MCF 10A (cell line): ENCODE measurements at regions of chrX and their contacts with region 1.

Region 1: DNA sequence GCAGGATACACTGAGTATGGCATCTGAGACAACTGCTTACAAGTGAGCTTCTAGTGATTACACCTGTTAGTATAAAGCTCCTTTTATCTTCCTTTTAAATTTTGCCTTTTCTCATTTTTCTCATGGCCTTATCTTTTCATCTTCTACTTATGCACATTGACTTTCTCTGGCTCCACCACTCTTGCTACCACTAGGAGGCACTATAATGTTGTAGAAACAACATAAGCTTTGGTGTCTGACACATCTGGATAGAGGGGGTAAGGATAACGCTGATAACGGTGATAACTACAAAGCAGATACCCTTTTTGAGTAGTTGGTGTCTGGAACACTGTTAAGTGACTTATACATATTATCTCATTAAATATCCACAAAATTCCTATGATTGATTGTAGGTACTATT is 187.4 kb upstream of the TEX13C start:
- DNase-seq: peak; percentile 28
- H3K4me3 Mint-ChIP-seq: no peak overlapping the region
- H3K27ac Mint-ChIP-seq: no peak overlapping the region
- H3K4me1 Mint-ChIP-seq: no peaks in the 10 kb centered on the region
- H3K27me3 Mint-ChIP-seq: no peaks in the 10 kb centered on the region
- CTCF ChIP-seq: peak; percentile 53

Region 2: GRCh38 chrX:124211312-124211942 is 920.9 kb before region 1 on chrX:
- CTCF ChIA-PET with region 1: interaction called, 3 read pairs
- POLR2A ChIA-PET with region 1: no interaction called
- intact Hi-C with region 1: loop called (anchors 2 kb)
- DNase-seq: peak; percentile 51
- H3K4me3 Mint-ChIP-seq: no peak overlapping the region
- H3K27ac Mint-ChIP-seq: no peak overlapping the region
- H3K4me1 Mint-ChIP-seq: no peaks in the 10 kb centered on the region
- H3K27me3 Mint-ChIP-seq: no peaks in the 10 kb centered on the region
- CTCF ChIP-seq: peak; percentile 45

Region 3: GRCh38 chrX:124395145-124395880 is 737.0 kb before region 1 on chrX:
- CTCF ChIA-PET with region 1: interaction called, 16 read pairs
- POLR2A ChIA-PET with region 1: no interaction called
- intact Hi-C with region 1: no loop called
- DNase-seq: no peak
- H3K4me3 Mint-ChIP-seq: no peak overlapping the region
- H3K27ac Mint-ChIP-seq: no peak overlapping the region
- H3K4me1 Mint-ChIP-seq: no peaks in the 10 kb centered on the region
- H3K27me3 Mint-ChIP-seq: no peaks in the 10 kb centered on the region
- CTCF ChIP-seq: no peak

Region 4: GRCh38 chrX:124413244-124413643 is 719.0 kb before region 1 on chrX:
- CTCF ChIA-PET with region 1: interaction called, 79 read pairs
- POLR2A ChIA-PET with region 1: interaction called, 3 read pairs
- intact Hi-C with region 1: no loop called
- DNase-seq: no peak
- H3K4me3 Mint-ChIP-seq: no peak overlapping the region
- H3K27ac Mint-ChIP-seq: no peak overlapping the region
- H3K4me1 Mint-ChIP-seq: no peaks in the 10 kb centered on the region
- H3K27me3 Mint-ChIP-seq: no peaks in the 10 kb centered on the region
- CTCF ChIP-seq: no peak

Region 5: DNA sequence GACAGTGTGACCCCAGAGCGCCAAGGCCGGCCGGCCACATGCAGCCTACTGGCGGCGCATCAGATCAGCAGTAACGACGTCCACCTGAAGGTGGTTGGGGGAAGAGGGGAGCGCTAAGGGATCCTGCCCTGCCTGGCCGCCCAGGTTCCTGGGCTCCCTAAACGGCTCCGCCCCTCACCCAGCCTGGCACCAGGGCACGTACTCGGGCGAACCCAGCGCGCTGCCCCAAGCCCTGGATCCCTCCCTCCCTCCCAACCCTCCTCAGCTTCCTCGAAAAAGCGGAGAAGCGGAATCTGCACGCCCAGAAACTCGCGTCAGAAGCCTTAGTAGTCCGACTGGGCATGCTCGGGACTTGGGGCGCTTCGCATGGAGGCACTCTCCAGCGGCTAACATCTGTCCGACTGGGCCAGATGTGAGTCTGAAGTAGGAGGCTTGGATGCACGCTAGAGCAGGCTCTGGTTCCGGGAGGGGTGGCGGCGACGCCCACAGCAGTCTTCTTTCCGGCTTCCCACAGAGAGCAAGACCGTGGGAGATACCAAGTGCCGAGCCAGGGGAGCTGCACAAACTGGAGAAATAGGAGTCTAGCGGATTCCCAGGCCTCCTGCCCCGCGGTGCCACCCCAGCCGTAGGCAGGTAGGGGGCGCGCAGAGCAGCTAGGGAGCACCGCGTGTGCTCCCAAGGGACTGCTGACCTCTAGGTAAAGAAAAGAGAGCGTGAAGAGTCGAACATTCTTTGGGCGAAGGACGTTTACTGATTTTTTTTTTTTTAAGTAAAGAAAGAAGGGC is 73.0 kb after region 1 on chrX:
- CTCF ChIA-PET with region 1: interaction called, 7 read pairs
- POLR2A ChIA-PET with region 1: interaction called, 14 read pairs
- intact Hi-C with region 1: no loop called
- DNase-seq: no peak
- H3K4me3 Mint-ChIP-seq: peak overlapping the region; percentile 77
- H3K27ac Mint-ChIP-seq: peak overlapping the region; percentile 19
- H3K4me1 Mint-ChIP-seq: peaks cover 5% of the 10 kb centered on the region
- H3K27me3 Mint-ChIP-seq: no peaks in the 10 kb centered on the region
- CTCF ChIP-seq: no peak

Region 6: DNA sequence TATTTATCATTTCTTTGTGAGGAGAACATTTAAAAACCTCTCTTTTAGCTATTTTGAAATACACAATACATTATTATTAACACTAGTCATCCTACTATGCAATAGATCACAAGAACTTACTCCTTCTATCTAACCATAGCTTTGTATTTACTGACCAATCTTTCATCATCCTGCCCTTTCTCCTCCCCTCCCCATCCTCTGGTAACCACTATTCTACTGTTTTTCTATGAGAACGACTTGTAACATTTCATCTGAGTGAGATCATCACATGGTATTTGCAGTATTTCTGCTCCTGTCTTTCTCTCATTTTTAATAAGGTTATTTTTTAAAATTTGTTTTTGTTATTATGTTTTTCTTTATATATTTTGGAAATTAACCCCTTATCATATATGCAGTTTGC is 519.1 kb after region 1 on chrX:
- CTCF ChIA-PET with region 1: no interaction called
- POLR2A ChIA-PET with region 1: no interaction called
- intact Hi-C with region 1: loop called (anchors 10 kb)
- DNase-seq: peak; percentile 24
- H3K4me3 Mint-ChIP-seq: peak overlapping the region; percentile 19
- H3K27ac Mint-ChIP-seq: peak overlapping the region; percentile 23
- H3K4me1 Mint-ChIP-seq: peaks cover 15% of the 10 kb centered on the region
- H3K27me3 Mint-ChIP-seq: no peaks in the 10 kb centered on the region
- CTCF ChIP-seq: no peak